ENCODE measurements at regions of chr1 and their contacts with region 1.

Region 1: GRCh38 chr1:6205849-6206519 is at the start of gene RNF207:
- DNase-seq: peak; percentile 73 to 86
- H3K4me3 ChIP-seq: peak within 1 kb of the TSS; percentile 94
- H3K27ac ChIP-seq: peak within 1 kb of the TSS; percentile 77
- H3K4me1 ChIP-seq: 0 out of 2 replicates have a peak, but pooled peaks cover 6% of the 10 kb centered on the region
- H3K27me3 ChIP-seq: no peaks in the 10 kb centered on the region
- CTCF ChIP-seq: no peak
- total RNA-seq, gene RNF207: 49.3 and 53.1 TPM in 2 replicates

Region 2: DNA sequence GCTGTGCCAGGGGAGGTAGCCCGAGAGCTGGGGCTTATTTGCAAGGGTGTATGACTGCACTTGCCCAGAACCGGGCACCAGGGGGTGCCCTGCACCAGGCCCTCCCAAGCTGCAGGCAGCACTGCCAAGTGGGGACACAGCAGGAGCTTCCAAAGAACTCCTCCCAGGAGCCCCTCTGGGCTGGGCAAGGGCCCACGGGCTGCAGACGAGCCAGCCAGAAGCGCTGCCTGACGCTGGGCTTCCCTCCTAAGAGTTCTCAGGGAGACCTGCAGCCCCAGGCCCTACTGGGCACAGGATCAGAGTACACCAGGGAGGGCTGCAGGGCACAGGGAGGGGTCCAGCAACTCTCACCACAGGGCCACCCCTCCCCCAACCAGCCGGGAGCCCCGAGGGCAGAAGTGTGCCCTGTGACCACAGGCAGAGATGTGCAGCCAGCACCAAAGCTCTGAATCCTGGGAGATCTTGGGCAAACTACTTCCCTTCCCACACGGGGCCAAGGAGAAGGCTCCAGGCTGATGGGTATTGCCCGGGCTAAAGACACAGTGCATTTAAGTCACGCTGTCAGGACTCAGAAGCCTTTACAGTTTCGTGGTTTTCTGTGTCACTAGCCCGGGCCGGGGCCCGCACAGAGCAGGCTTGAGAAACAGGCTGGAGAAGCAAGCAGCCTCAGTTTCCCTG is 96.9 kb before region 1 on chr1:
- CTCF ChIA-PET with region 1: interaction called, 4 read pairs
- POLR2A ChIA-PET with region 1: no interaction called
- intact Hi-C with region 1: loop called (anchors 1 kb)
- DNase-seq: peak; percentile 34 to 62
- H3K4me3 ChIP-seq: no peak overlapping the region
- H3K27ac ChIP-seq: no peak overlapping the region
- H3K4me1 ChIP-seq: no peaks in the 10 kb centered on the region
- H3K27me3 ChIP-seq: 0 out of 2 replicates have a peak, but pooled peaks cover 6% of the 10 kb centered on the region
- CTCF ChIP-seq: peak; percentile 74

Region 3: DNA sequence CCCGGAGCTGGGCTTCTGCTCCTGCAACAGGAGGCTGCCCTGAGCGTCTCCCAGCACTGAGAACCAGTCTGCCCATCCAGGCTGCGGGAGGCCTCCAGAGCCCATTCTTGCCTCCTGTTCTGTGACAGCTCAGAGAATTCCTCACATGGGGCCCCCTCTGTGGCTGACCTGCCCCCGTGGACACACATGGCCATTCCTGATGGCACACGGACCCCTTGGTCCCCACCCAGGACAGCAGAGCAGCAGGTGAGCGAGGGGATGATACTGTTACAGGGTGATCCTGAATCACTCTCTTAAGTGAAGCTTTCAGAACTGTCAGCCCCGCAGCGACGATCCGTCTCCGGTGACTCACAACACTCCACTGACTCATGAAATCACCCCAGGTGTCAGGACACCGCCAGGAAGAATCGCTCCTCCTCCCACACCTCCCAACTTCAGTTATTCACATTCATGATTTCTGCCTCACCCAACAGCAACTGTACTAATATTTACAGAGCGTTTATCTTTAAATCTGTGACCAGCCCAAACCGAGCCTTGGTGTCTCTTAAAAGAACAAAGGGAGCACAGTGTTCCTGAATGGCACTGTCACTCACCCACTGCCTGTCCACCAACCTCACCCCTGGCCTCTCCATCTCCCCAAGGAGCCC is 48.3 kb before region 1 on chr1:
- CTCF ChIA-PET with region 1: no interaction called
- POLR2A ChIA-PET with region 1: interaction called, 3 read pairs
- intact Hi-C with region 1: loop called (anchors 1 kb)
- DNase-seq: peak; percentile 83 to 95
- H3K4me3 ChIP-seq: no peak overlapping the region
- H3K27ac ChIP-seq: peak overlapping the region; percentile 64
- H3K4me1 ChIP-seq: peaks cover 27% of the 10 kb centered on the region
- H3K27me3 ChIP-seq: no peaks in the 10 kb centered on the region
- CTCF ChIP-seq: no peak

Region 4: DNA sequence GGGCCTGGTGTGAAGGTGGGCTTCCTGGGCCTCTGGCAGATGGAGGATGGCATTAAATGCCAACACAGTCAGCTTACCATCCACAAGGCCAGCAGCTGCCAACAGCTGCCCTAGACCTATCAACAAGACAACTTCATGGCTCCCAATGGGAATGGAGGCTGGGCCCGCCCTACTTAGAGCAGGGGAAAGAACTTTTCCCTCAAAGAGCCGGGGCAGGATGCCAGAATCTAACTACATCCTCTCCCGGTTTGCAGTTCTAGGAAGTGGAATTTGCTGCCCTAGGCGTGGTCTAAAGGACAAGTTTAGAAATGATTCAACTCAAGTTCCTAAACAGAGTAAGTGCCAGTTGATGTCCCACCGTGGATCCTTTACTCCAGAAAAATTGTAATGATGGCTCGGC is 16.7 kb after region 1 on chr1:
- CTCF ChIA-PET with region 1: interaction called, 13 read pairs
- POLR2A ChIA-PET with region 1: interaction called, 5 read pairs
- intact Hi-C with region 1: loop called (anchors 1 kb)
- DNase-seq: peak in 1 of 2 experiments; percentile 63
- H3K4me3 ChIP-seq: no peak overlapping the region
- H3K27ac ChIP-seq: no peak overlapping the region; the same call in 1 of the 2 replicates
- H3K4me1 ChIP-seq: peaks cover 58% of the 10 kb centered on the region
- H3K27me3 ChIP-seq: no peaks in the 10 kb centered on the region
- CTCF ChIP-seq: no peak

Region 5: DNA sequence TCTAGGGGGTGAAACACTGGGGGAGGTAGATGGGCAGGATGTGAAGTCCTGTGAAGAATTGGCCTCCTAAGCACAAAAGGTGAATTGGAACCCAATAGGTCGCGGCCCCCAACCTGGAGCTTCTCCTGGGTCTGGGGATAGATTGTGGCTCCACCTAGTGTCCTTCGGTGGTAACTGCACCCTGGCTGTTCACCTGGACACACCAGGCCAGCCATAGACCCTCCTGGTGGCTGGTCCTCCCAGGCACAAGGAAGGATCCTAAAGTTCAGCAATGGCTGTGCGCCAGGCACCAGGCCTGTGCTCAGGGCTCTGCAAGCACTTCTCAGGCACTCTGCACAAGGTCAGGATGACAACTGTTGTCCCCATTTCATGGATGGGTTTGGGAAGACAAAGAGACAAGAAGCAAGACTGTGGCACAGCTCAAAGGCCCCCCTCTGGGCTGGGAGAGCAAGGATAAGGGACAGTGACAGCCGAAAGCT is 232.1 kb after region 1 on chr1:
- CTCF ChIA-PET with region 1: interaction called, 3 read pairs
- POLR2A ChIA-PET with region 1: interaction called, 12 read pairs
- intact Hi-C with region 1: no loop called
- DNase-seq: peak; percentile 52 to 76
- H3K4me3 ChIP-seq: no peak overlapping the region
- H3K27ac ChIP-seq: no peak overlapping the region
- H3K4me1 ChIP-seq: no peaks in the 10 kb centered on the region
- H3K27me3 ChIP-seq: no peaks in the 10 kb centered on the region
- CTCF ChIP-seq: peak; percentile 89

Measured in PC-9 (cell line).